ENCODE measurements at regions of chr11 and their contacts with region 1.

Region 1: GRCh38 chr11:10792398-10792975 is 16.2 kb downstream of the EIF4G2 start:
- DNase-seq: peak; percentile 88
- ATAC-seq: peak; percentile 87
- H3K4me3 ChIP-seq: peak overlapping the region; percentile 28; the same call in 1 of the 2 replicates
- H3K27ac ChIP-seq: no peak overlapping the region
- H3K4me1 ChIP-seq: peaks cover 16% of the 10 kb centered on the region
- H3K27me3 ChIP-seq: no peaks in the 10 kb centered on the region
- CTCF ChIP-seq: peak; percentile 92

Region 2: DNA sequence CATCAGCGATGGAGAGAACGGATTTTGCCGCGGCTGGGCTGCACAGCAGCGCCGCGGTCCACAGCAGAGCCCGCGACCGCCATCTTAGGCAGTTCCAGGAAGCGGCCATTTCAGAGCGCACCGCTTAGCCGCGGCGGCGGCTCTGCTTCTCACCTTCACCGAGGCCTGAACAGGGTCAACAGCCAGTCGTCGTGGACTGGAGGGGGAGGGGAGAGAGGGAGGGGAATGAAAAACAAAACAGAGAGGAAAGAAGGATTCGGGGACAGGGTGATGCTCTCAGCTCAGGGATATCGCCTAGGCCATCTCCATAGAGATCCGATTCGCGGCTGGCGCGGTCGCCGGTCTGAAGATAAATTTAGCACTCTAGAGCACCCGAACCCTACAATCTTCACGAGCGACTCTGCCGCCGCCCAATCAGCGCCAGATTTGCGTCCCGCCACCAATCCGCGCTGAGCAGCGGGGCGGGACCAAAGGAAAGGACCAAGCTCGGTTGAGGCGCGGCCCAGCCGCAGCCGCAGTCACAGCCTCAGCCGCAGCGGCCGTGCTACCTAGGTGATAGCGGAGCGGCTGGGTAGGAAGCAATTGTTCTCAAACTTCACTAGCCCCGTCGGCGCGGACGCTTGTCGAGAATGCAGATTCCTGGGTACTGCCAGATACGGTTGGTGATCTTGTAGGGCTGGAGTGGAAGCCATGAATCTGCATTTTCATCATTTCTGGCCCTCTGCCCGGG is 65.4 kb after region 1 on chr11 and contains the start of gene ZBED5:
- CTCF ChIA-PET with region 1: interaction called, 7 read pairs
- POLR2A ChIA-PET with region 1: interaction called, 4 read pairs
- intact Hi-C with region 1: loop called (anchors 1 kb)
- DNase-seq: peak; percentile 97
- ATAC-seq: peak; percentile 93
- H3K4me3 ChIP-seq: peak within 1 kb of the TSS; percentile 76
- H3K27ac ChIP-seq: peak within 1 kb of the TSS; percentile 91
- H3K4me1 ChIP-seq: peaks cover 38% of the 10 kb centered on the region
- H3K27me3 ChIP-seq: no peaks in the 10 kb centered on the region
- CTCF ChIP-seq: no peak; the same call in 1 of the 2 replicates
- total RNA-seq, gene ZBED5: 19.5 and 21.0 TPM in 2 replicates

Region 3: DNA sequence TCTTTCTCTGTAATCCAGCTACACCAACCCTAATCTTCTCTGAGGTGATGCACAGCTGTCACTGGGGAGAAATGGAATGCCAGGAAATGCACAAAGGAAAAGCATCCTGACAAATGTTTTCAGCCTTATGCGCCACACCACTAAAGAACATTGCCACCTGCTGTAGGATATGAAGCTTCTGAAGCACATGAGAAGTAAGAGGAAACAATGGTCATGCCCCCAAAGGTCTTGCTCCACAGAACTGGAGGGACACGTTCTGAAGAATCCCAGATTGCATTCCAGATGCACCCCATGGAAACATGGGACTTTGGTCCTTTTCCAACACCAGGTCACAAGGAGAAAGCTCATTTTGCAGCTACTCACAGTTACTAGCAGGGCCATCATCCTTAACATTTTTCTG is 114.0 kb after region 1 on chr11:
- CTCF ChIA-PET with region 1: interaction called, 9 read pairs
- POLR2A ChIA-PET with region 1: no interaction called
- intact Hi-C with region 1: loop called (anchors 1 kb)
- DNase-seq: peak; percentile 49
- ATAC-seq: peak; percentile 69
- H3K4me3 ChIP-seq: no peak overlapping the region
- H3K27ac ChIP-seq: no peak overlapping the region
- H3K4me1 ChIP-seq: peaks cover 43% of the 10 kb centered on the region
- H3K27me3 ChIP-seq: no peaks in the 10 kb centered on the region
- CTCF ChIP-seq: peak; percentile 43

Region 4: GRCh38 chr11:11022125-11022730 is 229.7 kb after region 1 on chr11:
- CTCF ChIA-PET with region 1: interaction called, 18 read pairs
- POLR2A ChIA-PET with region 1: no interaction called
- intact Hi-C with region 1: loop called (anchors 1 kb)
- DNase-seq: peak; percentile 57
- ATAC-seq: peak; percentile 34; the same call in 1 of the 2 replicates
- H3K4me3 ChIP-seq: no peak overlapping the region
- H3K27ac ChIP-seq: no peak overlapping the region
- H3K4me1 ChIP-seq: peaks cover 6% of the 10 kb centered on the region
- H3K27me3 ChIP-seq: no peaks in the 10 kb centered on the region
- CTCF ChIP-seq: peak; percentile 56

Region 5: DNA sequence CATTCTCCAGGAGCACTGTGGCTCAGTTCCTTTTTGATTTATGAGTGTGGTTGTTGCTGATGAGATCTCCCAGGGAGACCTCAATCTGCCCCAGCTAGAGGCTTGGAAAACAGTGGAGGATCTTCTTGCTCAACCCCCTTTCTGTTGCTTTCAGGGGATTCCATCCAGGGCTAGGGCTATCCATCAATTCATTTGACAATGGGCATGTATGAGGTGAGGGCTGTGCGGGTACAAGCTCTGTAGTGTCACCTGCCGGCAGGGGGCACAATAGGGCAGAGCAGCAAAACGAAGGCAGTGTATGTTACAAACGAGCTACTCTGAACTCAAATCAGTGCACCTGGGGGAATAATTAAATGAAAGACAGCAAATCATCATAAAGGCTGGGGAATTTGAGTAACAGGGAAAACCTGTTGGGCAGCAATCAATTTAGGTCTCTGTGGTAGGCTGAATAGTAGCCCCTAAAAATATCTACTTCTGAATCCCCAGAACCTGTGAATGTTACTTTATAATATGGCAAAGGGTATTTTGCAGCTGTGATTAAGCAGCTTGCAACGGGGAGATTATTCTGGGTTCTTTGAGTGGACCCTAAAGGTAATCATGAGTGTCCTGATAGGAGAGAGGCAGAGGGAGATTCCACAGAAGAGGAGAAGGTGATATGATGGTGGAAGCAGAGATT is 235.7 kb after region 1 on chr11:
- CTCF ChIA-PET with region 1: interaction called, 18 read pairs
- POLR2A ChIA-PET with region 1: no interaction called
- intact Hi-C with region 1: no loop called
- DNase-seq: peak; percentile 73
- ATAC-seq: peak; percentile 87
- H3K4me3 ChIP-seq: no peak overlapping the region
- H3K27ac ChIP-seq: no peak overlapping the region
- H3K4me1 ChIP-seq: peaks cover 17% of the 10 kb centered on the region
- H3K27me3 ChIP-seq: 0 out of 2 replicates have a peak, but pooled peaks cover 3% of the 10 kb centered on the region
- CTCF ChIP-seq: peak; percentile 93

Region 6: DNA sequence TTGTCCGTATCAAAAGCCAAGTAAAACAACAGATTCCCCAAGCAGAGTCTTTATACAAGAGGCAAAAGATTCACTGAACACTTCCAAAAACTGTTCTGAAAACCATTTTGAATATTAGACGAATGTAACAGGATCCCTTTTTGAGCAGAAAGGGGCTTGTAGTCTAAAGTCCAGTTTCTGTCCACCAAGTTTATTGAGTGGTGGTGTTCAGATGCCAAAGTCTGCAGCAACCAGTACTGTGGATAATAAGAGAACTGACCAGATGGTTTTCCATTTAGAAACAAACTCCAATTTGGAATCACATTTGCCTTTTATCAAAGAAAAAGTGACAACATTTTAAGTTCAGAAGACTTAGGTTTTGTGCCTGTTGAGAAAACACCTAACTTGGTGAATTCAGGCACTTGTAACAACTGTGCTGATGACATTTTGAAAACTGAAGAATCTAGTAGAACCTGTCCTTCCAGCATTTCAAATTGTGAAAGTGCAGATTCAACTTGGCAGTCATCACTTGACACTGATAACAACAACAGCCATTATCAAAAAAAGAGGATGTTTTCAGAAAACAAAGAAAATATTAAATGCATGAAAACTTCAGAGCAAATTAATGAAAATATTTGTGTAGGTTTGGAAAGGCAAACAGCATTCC is 343.5 kb after region 1 on chr11:
- CTCF ChIA-PET with region 1: no interaction called
- POLR2A ChIA-PET with region 1: no interaction called
- intact Hi-C with region 1: no loop called
- DNase-seq: peak; percentile 64
- ATAC-seq: no peak
- H3K4me3 ChIP-seq: no peak overlapping the region
- H3K27ac ChIP-seq: no peak overlapping the region
- H3K4me1 ChIP-seq: peaks cover 8% of the 10 kb centered on the region; the same call in 1 of the 2 replicates
- H3K27me3 ChIP-seq: peaks cover 23% of the 10 kb centered on the region
- CTCF ChIP-seq: no peak

Measured in PC-3 (cell line).